PC-3 (cell line): ENCODE measurements at regions of chr16 and their contacts with region 1.

Region 1: DNA sequence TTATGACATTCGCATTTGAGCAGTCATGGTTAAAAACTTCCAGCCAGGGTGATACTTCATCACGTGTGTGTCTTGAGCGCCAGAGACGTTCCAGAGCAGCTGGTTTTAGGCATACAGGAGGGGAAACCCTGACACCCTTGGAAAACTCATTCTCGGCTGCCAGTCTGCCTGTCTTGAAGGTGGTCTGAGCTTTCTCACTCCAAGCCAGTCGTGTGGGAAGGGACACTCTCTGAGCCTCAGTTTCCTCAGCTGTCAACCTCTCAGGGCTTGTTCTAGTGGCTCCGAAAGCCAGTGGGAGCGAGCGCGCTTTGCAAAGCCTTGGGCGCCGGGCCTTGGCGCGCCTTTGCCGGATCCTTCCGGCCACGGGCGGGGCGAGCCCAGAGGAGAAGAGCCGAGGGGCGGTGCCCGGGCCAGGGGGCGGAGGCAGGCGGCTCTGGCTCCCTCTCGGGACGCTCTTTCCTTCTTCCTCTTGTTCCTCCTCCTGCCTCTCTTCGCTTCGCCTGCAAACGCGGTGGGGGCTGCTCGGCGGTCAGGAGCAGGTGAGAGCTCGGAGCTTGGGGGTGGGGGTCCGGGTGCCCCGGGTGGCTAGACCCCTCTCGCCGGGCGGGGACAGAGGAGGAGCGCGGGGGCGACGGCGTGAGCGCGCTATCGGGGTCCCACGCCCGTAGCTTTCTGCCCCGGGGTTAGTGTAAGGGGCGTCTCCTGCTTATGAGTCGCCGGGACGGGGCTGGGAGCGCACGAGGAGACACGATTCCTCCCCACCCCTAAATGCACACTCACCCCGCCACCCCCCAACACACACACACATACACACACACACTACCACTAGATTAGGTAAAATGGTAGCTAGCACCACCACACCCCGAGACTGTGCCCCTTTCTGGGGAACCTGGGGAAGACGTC is at the start of gene LDAF1:
- DNase-seq: peak; percentile 76
- ATAC-seq: peak; percentile 90
- H3K4me3 ChIP-seq: peak within 1 kb of the TSS; percentile 87
- H3K27ac ChIP-seq: peak within 1 kb of the TSS; percentile 36
- H3K4me1 ChIP-seq: peaks cover 39% of the 10 kb centered on the region
- H3K27me3 ChIP-seq: no peaks in the 10 kb centered on the region
- CTCF ChIP-seq: no peak
- total RNA-seq, gene LDAF1: 3.6 and 11.5 TPM in 2 replicates

Region 2: DNA sequence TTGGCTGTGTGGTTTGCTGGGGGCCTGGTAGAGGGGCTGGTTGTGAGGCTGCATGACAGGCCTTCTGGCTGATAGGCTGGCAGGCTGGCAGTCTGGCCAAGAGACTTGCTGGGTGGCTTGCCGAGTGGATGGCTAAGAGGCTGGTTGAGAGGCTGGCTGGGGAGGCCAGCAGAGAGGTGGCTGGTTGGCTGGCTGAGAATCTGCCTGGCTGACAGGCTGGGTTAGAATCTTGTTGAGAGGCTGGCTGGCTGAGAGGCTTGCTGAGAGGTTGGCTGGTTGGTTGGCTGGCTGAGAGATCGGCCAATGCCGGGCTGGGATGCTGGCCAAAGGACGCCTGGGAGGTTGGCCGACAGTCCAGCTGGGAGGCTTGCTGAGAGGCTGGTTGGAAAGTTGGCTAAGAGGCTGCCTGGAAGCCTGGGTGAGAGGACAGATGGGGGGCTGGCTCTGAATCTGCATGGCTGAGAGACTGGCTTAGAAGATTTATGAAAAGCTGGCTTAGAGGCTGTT is 546.4 kb before region 1 on chr16:
- CTCF ChIA-PET with region 1: no interaction called
- POLR2A ChIA-PET with region 1: no interaction called
- intact Hi-C with region 1: no loop called
- DNase-seq: no peak
- ATAC-seq: no peak
- H3K4me3 ChIP-seq: no peak overlapping the region
- H3K27ac ChIP-seq: no peak overlapping the region
- H3K4me1 ChIP-seq: no peaks in the 10 kb centered on the region
- H3K27me3 ChIP-seq: peaks cover 11% of the 10 kb centered on the region; the same call in 1 of the 2 replicates
- CTCF ChIP-seq: no peak

Region 3: GRCh38 chr16:20900299-20901067 is 258.0 kb before region 1 on chr16 and contains the starts of genes DCUN1D3 and LYRM1:
- CTCF ChIA-PET with region 1: no interaction called
- POLR2A ChIA-PET with region 1: interaction called, 24 read pairs
- intact Hi-C with region 1: no loop called
- DNase-seq: peak; percentile 92
- ATAC-seq: peak; percentile 77
- H3K4me3 ChIP-seq: peak within 1 kb of the TSS; percentile 96
- H3K27ac ChIP-seq: peak within 1 kb of the TSS; percentile 97
- H3K4me1 ChIP-seq: peaks cover 66% of the 10 kb centered on the region
- H3K27me3 ChIP-seq: no peaks in the 10 kb centered on the region
- CTCF ChIP-seq: no peak
- total RNA-seq, gene DCUN1D3: 8.5 and 10.5 TPM in 2 replicates
- total RNA-seq, gene LYRM1: 21.9 and 35.1 TPM in 2 replicates

Region 4: GRCh38 chr16:20944861-20945574 is 213.4 kb before region 1 on chr16:
- CTCF ChIA-PET with region 1: no interaction called
- POLR2A ChIA-PET with region 1: no interaction called
- intact Hi-C with region 1: no loop called
- DNase-seq: peak; percentile 25
- ATAC-seq: peak; percentile 43
- H3K4me3 ChIP-seq: no peak overlapping the region
- H3K27ac ChIP-seq: no peak overlapping the region
- H3K4me1 ChIP-seq: no peaks in the 10 kb centered on the region
- H3K27me3 ChIP-seq: no peaks in the 10 kb centered on the region
- CTCF ChIP-seq: no peak; the same call in 1 of the 2 replicates

Region 5: DNA sequence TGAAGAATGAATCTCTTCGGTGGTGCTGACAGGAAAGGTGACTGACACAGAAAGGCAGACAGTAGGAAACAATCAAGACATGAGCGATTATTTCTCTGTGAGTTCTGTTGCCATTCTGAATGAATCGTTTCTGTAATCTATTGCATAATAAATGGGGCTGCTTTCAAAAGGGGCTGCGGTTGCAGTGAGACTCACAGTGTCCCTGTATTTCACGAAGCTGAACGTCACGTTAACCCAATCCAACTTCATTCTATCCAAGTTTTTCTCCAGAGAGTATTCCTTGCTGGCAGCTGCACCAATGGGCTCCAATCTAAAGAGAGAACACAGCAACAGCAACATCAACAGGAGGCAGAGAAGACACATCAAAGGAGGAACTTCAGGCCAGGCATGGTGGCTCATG is 83.2 kb before region 1 on chr16:
- CTCF ChIA-PET with region 1: no interaction called
- POLR2A ChIA-PET with region 1: no interaction called
- intact Hi-C with region 1: no loop called
- DNase-seq: no peak
- ATAC-seq: no peak
- H3K4me3 ChIP-seq: no peak overlapping the region
- H3K27ac ChIP-seq: no peak overlapping the region
- H3K4me1 ChIP-seq: no peaks in the 10 kb centered on the region
- H3K27me3 ChIP-seq: no peaks in the 10 kb centered on the region
- CTCF ChIP-seq: no peak

Region 6: DNA sequence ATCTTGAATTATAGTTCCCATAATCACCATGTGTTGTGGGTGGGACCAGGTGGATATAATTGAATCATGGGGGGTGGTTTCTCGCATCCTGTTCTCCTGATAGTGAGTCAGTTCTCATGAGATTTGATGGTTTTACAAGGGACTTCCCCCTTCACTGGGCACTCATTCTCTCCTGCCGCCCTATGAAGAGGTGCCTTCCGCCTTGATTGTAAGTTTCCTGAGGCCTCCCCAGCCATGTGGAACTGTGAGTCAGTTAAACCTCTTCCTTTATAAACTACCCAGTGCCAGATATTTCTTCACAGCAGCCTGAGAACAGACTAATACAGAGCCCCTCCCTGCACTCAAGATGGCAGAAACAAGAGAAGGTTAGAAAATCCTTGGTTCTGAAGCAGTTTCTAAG is 26.4 kb after region 1 on chr16:
- CTCF ChIA-PET with region 1: interaction called, 10 read pairs
- POLR2A ChIA-PET with region 1: no interaction called
- intact Hi-C with region 1: no loop called
- DNase-seq: no peak
- ATAC-seq: no peak
- H3K4me3 ChIP-seq: no peak overlapping the region
- H3K27ac ChIP-seq: no peak overlapping the region
- H3K4me1 ChIP-seq: peaks cover 11% of the 10 kb centered on the region
- H3K27me3 ChIP-seq: no peaks in the 10 kb centered on the region
- CTCF ChIP-seq: no peak

Region 7: DNA sequence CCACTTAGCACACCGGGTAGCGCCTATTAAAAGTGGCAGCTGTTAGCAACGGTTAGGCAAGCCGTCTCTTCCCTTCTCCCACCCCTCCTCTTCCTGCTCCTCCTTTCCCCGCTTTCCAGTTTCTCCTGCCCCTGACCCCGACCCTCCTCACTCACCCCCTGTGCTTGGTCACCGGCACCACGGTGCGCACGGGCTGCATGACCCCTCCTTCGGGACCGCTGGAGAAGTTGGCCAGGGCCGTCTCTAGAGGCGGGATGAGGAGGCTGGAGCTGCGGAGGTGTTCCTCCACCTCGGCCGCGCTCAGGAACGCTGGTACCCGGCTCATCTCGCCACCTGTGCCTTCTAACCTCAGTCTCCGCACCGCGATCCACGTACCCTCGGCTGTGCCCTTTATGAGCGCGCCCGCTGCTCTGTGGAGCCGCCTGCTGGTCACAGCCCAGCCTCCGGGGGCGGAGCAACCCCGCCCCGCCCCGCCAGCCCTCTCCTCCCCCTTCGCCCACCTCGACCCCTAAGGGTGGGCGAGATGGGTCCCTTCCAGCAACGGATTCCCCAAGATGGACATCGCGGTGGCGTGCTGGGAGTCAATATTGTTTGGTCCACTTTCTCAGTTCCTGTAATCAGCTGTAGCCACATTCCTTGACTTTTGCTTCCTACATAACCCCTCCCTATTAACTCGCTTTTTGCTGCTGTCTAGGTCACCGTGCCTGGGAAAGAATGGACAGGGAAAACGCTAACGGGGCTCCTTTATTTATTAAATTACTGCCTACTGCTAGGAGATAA is 119.7 kb after region 1 on chr16 and contains the start of gene CRYM:
- CTCF ChIA-PET with region 1: interaction called, 6 read pairs
- POLR2A ChIA-PET with region 1: no interaction called
- intact Hi-C with region 1: loop called (anchors 1 kb)
- DNase-seq: peak; percentile 37
- ATAC-seq: peak; percentile 79
- H3K4me3 ChIP-seq: peak within 1 kb of the TSS; percentile 50; the same call in 1 of the 2 replicates
- H3K27ac ChIP-seq: no peak within 1 kb of the TSS
- H3K4me1 ChIP-seq: no peaks in the 10 kb centered on the region
- H3K27me3 ChIP-seq: peaks cover 42% of the 10 kb centered on the region
- CTCF ChIP-seq: peak; percentile 69
- total RNA-seq, gene CRYM: not detected in 2 replicates

Region 8: DNA sequence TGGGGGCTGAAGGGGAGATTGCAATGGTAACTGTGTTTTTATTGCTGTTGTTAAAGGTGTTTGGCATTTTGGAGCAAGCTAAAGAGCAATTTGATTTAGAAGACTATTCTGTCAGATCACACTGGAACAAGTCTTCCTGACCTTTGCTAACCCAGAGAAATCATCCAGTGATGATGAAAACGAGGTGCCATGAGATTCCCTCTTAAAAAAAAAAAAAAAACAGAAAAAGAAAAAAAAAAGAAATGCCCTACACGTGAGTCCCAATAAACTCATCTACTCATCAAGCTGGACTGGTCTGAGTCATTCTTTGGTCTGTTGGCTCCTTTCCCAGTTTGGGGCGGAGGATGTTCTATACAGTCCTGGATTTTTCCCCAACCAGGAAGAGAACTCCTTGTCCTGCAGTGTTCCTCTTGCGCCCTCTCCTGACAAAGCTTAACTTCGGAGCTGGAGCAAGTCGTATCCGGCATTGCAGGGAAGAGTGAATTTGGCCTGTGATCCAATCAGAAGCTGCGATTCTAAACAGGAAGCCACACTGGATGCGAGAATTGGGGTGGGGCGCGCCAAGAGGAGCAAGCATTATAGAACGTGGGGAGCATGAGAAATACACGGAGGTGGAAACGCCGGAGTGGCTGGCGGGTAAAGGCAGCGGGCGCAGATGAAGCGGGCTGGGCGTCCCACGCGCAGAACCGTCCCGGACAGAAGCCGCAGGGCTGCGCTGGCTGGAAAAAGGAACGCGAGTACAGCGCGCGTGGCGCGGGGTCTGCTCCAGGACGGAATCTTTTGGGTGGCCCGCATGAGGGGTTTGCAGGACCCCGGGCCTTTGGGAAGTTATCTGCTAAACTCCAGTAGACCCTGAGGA is 142.1 kb after region 1 on chr16:
- CTCF ChIA-PET with region 1: interaction called, 8 read pairs
- POLR2A ChIA-PET with region 1: interaction called, 5 read pairs
- intact Hi-C with region 1: loop called (anchors 1 kb)
- DNase-seq: peak; percentile 98
- ATAC-seq: peak; percentile 74
- H3K4me3 ChIP-seq: peak overlapping the region; percentile 81
- H3K27ac ChIP-seq: peak overlapping the region; percentile 75
- H3K4me1 ChIP-seq: peaks cover 15% of the 10 kb centered on the region
- H3K27me3 ChIP-seq: no peaks in the 10 kb centered on the region
- CTCF ChIP-seq: peak; percentile 86

Region 9: GRCh38 chr16:22321339-22322001 is 1163.0 kb after region 1 on chr16:
- CTCF ChIA-PET with region 1: no interaction called
- POLR2A ChIA-PET with region 1: no interaction called
- intact Hi-C with region 1: loop called (anchors 5 kb)
- DNase-seq: peak; percentile 55
- ATAC-seq: peak; percentile 72
- H3K4me3 ChIP-seq: no peak overlapping the region
- H3K27ac ChIP-seq: no peak overlapping the region
- H3K4me1 ChIP-seq: no peaks in the 10 kb centered on the region
- H3K27me3 ChIP-seq: no peaks in the 10 kb centered on the region
- CTCF ChIP-seq: peak; percentile 89